Activated naive CD4-positive, alpha-beta T cell treated with anti-CD3 and anti-CD28 coated beads, Interleukin-2, amount 10 ng/mL, durations not matched to agents 7 days and 5 days (primary cell): ENCODE measurements at regions of chr6 and their contacts with region 1.

Region 1: GRCh38 chr6:89145787-89146646 is at the start of gene PM20D2:
- DNase-seq: peak; percentile 74
- H3K4me3 Mint-ChIP-seq: peak within 1 kb of the TSS; percentile 88
- H3K27ac Mint-ChIP-seq: peak within 1 kb of the TSS; percentile 93
- H3K4me1 Mint-ChIP-seq: peaks cover 37% of the 10 kb centered on the region
- H3K27me3 Mint-ChIP-seq: no peaks in the 10 kb centered on the region

Region 2: DNA sequence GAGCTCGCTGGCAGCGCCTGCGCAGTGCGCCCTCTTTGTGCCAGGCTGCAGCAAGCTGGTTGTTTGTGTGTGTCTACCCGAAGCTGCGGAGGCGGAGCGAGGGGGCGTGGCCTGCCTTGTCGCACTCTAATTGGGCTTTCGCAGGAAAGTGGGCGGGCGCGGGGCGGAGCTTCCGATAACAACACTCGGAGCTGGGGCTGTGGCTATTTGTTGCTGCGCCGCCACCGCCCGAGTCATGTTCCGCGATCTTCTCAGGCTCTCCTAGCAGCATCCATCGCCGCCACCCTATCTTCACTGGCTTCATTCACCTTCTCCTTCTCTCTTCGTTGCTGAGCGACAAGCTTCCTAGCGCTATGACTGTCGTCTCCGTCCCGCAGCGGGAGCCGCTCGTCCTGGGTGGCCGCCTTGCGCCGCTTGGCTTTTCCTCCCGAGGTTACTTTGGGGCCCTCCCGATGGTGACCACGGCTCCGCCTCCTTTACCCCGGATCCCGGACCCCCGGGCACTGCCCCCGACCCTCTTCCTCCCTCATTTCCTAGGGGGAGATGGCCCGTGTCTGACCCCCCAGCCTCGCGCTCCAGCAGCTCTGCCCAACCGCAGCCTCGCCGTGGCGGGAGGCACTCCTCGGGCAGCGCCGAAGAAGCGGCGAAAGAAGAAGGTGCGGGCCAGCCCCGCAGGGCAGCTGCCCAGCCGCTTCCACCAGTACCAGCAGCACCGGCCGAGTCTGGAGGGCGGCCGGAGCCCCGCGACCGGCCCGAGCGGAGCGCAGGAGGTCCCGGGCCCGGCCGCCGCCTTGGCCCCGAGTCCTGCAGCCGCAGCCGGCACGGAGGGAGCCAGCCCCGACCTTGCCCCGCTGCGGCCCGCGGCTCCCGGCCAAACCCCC is 65.2 kb before region 1 on chr6 and contains the start of gene PNRC1:
- CTCF ChIA-PET with region 1: interaction called, 20 read pairs
- DNase-seq: peak; percentile 100
- H3K4me3 Mint-ChIP-seq: peak within 1 kb of the TSS; percentile 95
- H3K27ac Mint-ChIP-seq: peak within 1 kb of the TSS; percentile 100
- H3K4me1 Mint-ChIP-seq: peaks cover 51% of the 10 kb centered on the region
- H3K27me3 Mint-ChIP-seq: peaks cover 8% of the 10 kb centered on the region